ENCODE measurements at regions of chr1 and their contacts with region 1.

Region 1: DNA sequence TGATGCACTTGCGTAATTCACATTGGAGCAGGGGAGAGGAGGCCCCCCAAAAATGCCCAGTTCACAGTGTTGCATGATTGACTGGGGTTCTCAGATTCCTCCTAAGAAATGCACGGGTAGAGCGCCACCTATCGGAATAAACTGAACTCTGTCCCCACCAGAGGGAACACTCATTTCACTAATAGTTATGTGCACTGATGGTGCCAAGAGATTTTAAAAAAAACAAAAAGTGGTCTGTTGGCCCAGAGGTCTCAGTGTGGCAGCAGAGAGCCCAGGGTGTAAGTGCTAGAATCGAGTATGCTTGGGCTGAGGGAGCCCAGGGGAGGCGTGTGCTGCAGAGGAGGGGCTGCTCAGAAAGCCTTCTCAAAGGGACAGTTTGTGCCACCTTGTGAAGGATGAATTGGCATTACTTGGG is 6.9 kb downstream of the PINK1 start:
- H3K4me3 Mint-ChIP-seq: no peak overlapping the region
- H3K27ac Mint-ChIP-seq: no peak overlapping the region
- H3K4me1 Mint-ChIP-seq: peaks cover 11% of the 10 kb centered on the region
- H3K27me3 Mint-ChIP-seq: no peaks in the 10 kb centered on the region

Region 2: DNA sequence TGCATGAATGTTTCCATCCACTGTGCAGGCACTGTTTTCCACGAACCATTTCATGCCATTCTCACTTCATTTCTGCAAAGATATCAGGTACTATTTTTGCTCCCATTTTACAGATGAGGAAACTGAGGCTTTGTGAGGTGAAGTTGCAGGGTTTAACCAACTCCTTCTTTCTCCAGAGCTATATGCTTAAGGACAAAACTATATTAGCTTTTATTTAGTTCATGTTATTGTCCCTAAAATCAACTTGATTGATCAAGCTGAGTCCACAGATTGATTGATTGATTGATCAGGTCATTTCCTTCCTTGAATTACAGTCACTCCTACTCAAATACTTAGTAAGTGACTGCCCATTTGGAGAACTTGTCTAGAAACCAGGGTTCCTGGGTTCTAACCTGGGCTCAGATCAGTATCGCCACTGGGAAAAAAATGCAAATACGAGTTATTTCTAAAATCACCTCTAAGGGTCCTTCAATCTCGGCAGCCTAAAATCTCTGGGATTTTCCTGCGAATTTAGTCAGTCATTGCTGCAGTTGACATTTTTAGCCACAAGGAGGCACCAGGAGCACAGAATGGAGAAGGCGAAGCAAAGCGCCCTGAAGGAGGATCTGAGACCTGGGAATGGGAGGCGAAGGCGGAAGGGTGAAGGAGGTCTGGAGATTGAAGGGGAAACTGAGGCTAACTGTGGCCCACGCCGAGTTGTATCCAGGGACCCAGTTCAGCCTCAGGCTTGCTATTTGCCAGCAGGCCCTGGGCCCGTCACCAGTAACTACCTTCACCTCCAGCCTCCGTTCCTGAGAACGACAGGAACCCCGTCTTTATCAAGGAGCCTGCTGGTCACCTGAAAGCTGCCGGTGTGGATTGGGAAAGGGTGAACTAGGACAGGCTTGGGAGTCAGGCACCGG is 118.0 kb before region 1 on chr1:
- intact Hi-C with region 1: loop called (anchors 1 kb)
- H3K4me3 Mint-ChIP-seq: no peak overlapping the region
- H3K27ac Mint-ChIP-seq: no peak overlapping the region
- H3K4me1 Mint-ChIP-seq: peaks cover 6% of the 10 kb centered on the region
- H3K27me3 Mint-ChIP-seq: peaks cover 47% of the 10 kb centered on the region

Region 3: GRCh38 chr1:20574686-20575540 is 65.3 kb before region 1 on chr1:
- intact Hi-C with region 1: loop called (anchors 1 kb)
- H3K4me3 Mint-ChIP-seq: no peak overlapping the region
- H3K27ac Mint-ChIP-seq: no peak overlapping the region
- H3K4me1 Mint-ChIP-seq: peaks cover 13% of the 10 kb centered on the region
- H3K27me3 Mint-ChIP-seq: peaks cover 37% of the 10 kb centered on the region